ENCODE measurements at regions of chr6 and their contacts with region 1.

Region 1: GRCh38 chr6:27312146-27312949 is at the start of gene POM121L2:
- DNase-seq: peak; percentile 92
- ATAC-seq: peak; percentile 82
- H3K4me3 ChIP-seq: peak within 1 kb of the TSS; percentile 89
- H3K27ac ChIP-seq: no peak within 1 kb of the TSS
- H3K4me1 ChIP-seq: no peaks in the 10 kb centered on the region
- H3K27me3 ChIP-seq: no peaks in the 10 kb centered on the region
- CTCF ChIP-seq: peak; percentile 81
- total RNA-seq, gene POM121L2: not detected in 2 replicates

Region 2: DNA sequence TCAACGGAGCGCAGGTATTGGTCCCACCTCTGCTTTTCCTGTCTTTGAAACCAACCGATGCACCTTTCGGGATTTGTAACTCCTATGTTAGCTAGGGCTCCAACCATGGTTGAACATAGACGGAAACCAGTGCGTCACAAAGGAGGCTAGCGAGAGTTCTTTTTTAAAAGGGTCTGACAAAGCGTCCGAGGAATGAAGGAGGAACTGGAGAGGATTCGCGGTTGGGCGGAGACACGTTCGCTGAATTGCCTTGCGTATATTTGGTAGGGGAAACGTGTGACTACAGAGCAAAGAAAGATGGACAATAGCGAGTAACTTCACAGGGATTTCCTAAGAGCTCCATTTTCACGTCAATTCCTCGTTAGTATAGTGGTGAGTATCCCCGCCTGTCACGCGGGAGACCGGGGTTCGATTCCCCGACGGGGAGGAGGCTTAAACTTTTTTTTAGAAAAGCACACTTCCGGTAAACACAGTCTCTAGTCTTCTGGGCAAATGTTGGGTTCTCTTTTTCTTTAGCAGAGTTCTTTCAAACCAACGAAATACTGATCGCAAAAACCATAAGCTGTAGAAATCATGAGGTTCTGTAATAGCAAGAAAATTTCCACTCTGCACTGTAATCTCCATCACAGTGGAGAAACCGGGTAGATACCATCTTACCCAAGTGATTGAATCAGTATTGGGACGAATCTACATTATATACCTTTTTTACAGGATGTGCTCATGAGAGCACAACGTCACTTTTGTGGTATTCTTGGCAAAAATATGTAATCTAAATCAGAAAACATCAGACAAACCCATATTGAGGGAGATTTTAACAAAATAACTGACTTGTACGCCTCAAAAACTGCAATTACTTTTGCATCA is 167.2 kb after region 1 on chr6:
- CTCF ChIA-PET with region 1: no interaction called
- POLR2A ChIA-PET with region 1: no interaction called
- intact Hi-C with region 1: loop called (anchors 1 kb)
- DNase-seq: peak; percentile 89
- ATAC-seq: peak; percentile 71
- H3K4me3 ChIP-seq: peak overlapping the region; percentile 83
- H3K27ac ChIP-seq: peak overlapping the region; percentile 81
- H3K4me1 ChIP-seq: peaks cover 8% of the 10 kb centered on the region; the same call in 1 of the 2 replicates
- H3K27me3 ChIP-seq: no peaks in the 10 kb centered on the region
- CTCF ChIP-seq: no peak

Region 3: DNA sequence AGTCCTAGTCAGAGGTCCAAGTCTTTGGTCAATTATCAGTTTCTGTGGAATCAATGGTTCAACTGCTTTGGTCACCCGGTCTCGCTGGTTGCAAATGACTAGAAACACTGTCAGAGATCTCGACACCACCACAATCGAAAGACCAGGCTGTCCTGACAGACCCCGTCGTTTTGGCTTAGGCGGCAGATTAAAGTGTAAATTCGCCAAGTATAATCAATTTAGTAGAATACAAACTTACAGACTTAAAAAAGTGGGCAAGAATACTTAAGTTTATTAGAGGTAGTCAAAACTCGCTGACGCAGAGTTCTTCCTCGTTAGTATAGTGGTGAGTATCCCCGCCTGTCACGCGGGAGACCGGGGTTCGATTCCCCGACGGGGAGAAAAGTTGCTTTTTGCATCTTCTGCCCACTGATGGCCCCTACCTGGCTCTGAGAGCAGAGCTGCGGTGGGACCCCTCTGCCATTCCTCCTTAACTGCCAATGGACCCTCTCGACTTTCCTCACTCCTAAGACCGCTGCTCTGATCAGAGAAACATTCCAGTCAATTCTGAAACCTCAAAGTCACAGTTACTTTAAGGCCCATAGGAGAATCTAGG is 191.2 kb after region 1 on chr6:
- CTCF ChIA-PET with region 1: no interaction called
- POLR2A ChIA-PET with region 1: no interaction called
- intact Hi-C with region 1: loop called (anchors 5 kb)
- DNase-seq: peak; percentile 91
- ATAC-seq: peak; percentile 25
- H3K4me3 ChIP-seq: peak overlapping the region; percentile 86
- H3K27ac ChIP-seq: peak overlapping the region; percentile 11; the same call in 1 of the 2 replicates
- H3K4me1 ChIP-seq: peaks cover 8% of the 10 kb centered on the region; the same call in 1 of the 2 replicates
- H3K27me3 ChIP-seq: no peaks in the 10 kb centered on the region
- CTCF ChIP-seq: no peak

Region 4: GRCh38 chr6:27608916-27609883 is 296.9 kb after region 1 on chr6:
- CTCF ChIA-PET with region 1: interaction called, 7 read pairs
- POLR2A ChIA-PET with region 1: no interaction called
- intact Hi-C with region 1: loop called (anchors 2 kb)
- DNase-seq: peak; percentile 86
- ATAC-seq: peak; percentile 89
- H3K4me3 ChIP-seq: peak overlapping the region; percentile 39; the same call in 1 of the 2 replicates
- H3K27ac ChIP-seq: peak overlapping the region; percentile 49
- H3K4me1 ChIP-seq: peaks cover 7% of the 10 kb centered on the region
- H3K27me3 ChIP-seq: no peaks in the 10 kb centered on the region
- CTCF ChIP-seq: peak; percentile 90

Region 5: GRCh38 chr6:27687154-27688013 is 375.0 kb after region 1 on chr6:
- CTCF ChIA-PET with region 1: no interaction called
- POLR2A ChIA-PET with region 1: no interaction called
- intact Hi-C with region 1: loop called (anchors 10 kb)
- DNase-seq: peak; percentile 86
- ATAC-seq: peak; percentile 78
- H3K4me3 ChIP-seq: peak overlapping the region; percentile 83
- H3K27ac ChIP-seq: 0 out of 2 replicates have a peak overlapping the region, but pooled peaks have one; percentile 7
- H3K4me1 ChIP-seq: no peaks in the 10 kb centered on the region
- H3K27me3 ChIP-seq: no peaks in the 10 kb centered on the region
- CTCF ChIP-seq: peak; percentile 90